Heart left ventricle (tissue), 16 donors: ENCODE measurements at regions of chr7 and their contacts with region 1.

Region 1: GRCh38 chr7:11427686-11428273 is 404.2 kb downstream of the THSD7A start:
- DNase-seq: no peak
- ATAC-seq: no peak
- H3K4me3 ChIP-seq: no peak overlapping the region
- H3K27ac ChIP-seq: no peak overlapping the region
- H3K4me1 ChIP-seq: peaks cover 0 to 10% (median 0%) of the 10 kb centered on the region in 12 donors
- H3K27me3 ChIP-seq: no peaks in the 10 kb centered on the region
- CTCF ChIP-seq: peak; percentile 55 to 89 (median 74)
- POLR2A ChIP-seq: no peak

Region 2: GRCh38 chr7:11343818-11344413 is 83.9 kb before region 1 on chr7:
- intact Hi-C with region 1: no loop called
- DNase-seq: no peak
- ATAC-seq: no peak
- H3K4me3 ChIP-seq: peak overlapping the region in 1 of 12 donors; percentile 29
- H3K27ac ChIP-seq: no peak overlapping the region
- H3K4me1 ChIP-seq: peaks cover 0 to 5% (median 0%) of the 10 kb centered on the region in 12 donors
- H3K27me3 ChIP-seq: no peaks in the 10 kb centered on the region
- CTCF ChIP-seq: peak; percentile 54 to 81 (median 74)
- POLR2A ChIP-seq: no peak

Region 3: GRCh38 chr7:11492307-11492706 is 64.5 kb after region 1 on chr7:
- intact Hi-C with region 1: no loop called
- DNase-seq: no peak
- ATAC-seq: no peak
- H3K4me3 ChIP-seq: no peak overlapping the region
- H3K27ac ChIP-seq: no peak overlapping the region
- H3K4me1 ChIP-seq: no peaks in the 10 kb centered on the region
- H3K27me3 ChIP-seq: no peaks in the 10 kb centered on the region
- CTCF ChIP-seq: no peak
- POLR2A ChIP-seq: no peak

Region 4: DNA sequence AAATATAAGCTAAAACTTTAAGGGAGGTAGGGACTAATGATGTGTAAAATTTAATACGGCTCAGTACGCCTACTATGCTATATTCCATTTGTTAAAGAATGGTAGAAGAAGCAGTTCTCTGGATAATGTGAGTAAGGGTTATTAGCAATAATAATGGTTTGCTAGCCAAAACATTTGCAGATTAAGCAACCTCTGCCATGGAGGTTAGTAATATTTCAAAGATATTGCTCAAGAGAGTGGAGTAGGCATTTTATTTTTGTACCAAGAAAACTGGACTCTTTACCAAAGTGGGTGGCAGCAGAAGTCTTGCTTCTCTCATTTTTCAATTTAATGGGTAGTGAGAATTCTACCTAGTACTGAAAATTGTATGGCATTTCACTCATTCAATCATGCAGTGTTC is 624.4 kb after region 1 on chr7:
- intact Hi-C with region 1: loop called in 1 of 10 experiments (anchors 10 kb)
- DNase-seq: no peak
- ATAC-seq: no peak
- H3K4me3 ChIP-seq: no peak overlapping the region
- H3K27ac ChIP-seq: no peak overlapping the region
- H3K4me1 ChIP-seq: no peaks in the 10 kb centered on the region
- H3K27me3 ChIP-seq: no peaks in the 10 kb centered on the region
- CTCF ChIP-seq: no peak
- POLR2A ChIP-seq: no peak

Region 5: DNA sequence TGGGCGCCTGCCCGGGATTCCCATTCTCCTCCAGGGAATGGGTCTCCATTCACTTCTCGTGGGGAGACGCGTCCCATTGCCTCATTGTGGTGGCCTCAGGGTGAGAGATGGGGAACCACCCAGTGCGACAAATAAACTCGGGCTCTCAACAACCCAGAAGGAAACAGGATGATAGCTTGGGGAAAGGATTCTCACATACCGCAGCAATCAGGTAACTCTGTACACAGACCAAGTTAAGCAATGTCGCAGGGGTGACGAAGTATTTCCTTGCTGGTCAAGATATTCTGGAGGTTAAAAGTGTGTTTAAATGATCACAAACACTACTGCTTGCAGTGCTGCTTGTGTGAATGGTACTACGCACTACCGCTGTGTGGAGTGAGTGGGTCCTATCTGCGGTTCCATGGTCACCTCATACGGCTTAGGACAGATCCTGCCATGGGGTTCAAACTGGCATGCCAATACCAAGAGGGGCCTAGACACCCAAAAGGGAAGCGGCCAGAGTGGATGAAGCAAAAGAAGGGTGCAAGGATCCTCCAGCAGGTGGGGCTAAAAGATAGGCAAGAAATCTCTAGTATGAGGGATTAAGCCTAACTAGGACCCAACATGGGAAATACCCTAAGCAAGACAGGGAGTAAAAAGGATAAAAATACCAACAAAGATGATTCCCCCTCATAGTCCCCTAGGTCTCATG is 639.5 kb after region 1 on chr7:
- intact Hi-C with region 1: loop called in 1 of 10 experiments (anchors 10 kb)
- DNase-seq: peak in 1 of 5 donors; percentile 30
- ATAC-seq: peak in 3 of 4 donors; percentile 47 to 54 (median 48)
- H3K4me3 ChIP-seq: no peak overlapping the region
- H3K27ac ChIP-seq: no peak overlapping the region
- H3K4me1 ChIP-seq: no peaks in the 10 kb centered on the region
- H3K27me3 ChIP-seq: no peaks in the 10 kb centered on the region
- CTCF ChIP-seq: peak; percentile 43 to 67 (median 54)
- POLR2A ChIP-seq: no peak

Region 6: GRCh38 chr7:12322284-12322902 is 894.6 kb after region 1 on chr7:
- intact Hi-C with region 1: loop called in 9 of 10 experiments (anchors 2 to 5 kb)
- DNase-seq: no peak
- ATAC-seq: no peak
- H3K4me3 ChIP-seq: no peak overlapping the region
- H3K27ac ChIP-seq: no peak overlapping the region
- H3K4me1 ChIP-seq: no peaks in the 10 kb centered on the region
- H3K27me3 ChIP-seq: peaks cover 0 to under 1% (median 0%) of the 10 kb centered on the region in 9 donors
- CTCF ChIP-seq: peak; percentile 49 to 78 (median 66)
- POLR2A ChIP-seq: no peak